Activated CD4-positive, alpha-beta memory T cell treated with anti-CD3 and anti-CD28 coated beads for 36 hours (primary cell): ENCODE measurements at regions of chr22 and their contacts with region 1.

Region 1: GRCh38 chr22:24805790-24806662 is at the start of gene SGSM1:
- DNase-seq: peak; percentile 85
- H3K4me3 Mint-ChIP-seq: peak within 1 kb of the TSS; percentile 66
- H3K27ac Mint-ChIP-seq: no peak within 1 kb of the TSS
- H3K4me1 Mint-ChIP-seq: peaks cover 47% of the 10 kb centered on the region
- H3K27me3 Mint-ChIP-seq: no peaks in the 10 kb centered on the region
- total RNA-seq, gene SGSM1: 0.29 to 0.38 TPM

Region 2: GRCh38 chr22:24555157-24556039 is 250.6 kb before region 1 on chr22 and contains the start of gene SNRPD3:
- CTCF ChIA-PET with region 1: no interaction called
- POLR2A ChIA-PET with region 1: no interaction called
- intact Hi-C with region 1: loop called (anchors 10 kb)
- DNase-seq: peak; percentile 100
- H3K4me3 Mint-ChIP-seq: peak within 1 kb of the TSS; percentile 97
- H3K27ac Mint-ChIP-seq: peak within 1 kb of the TSS; percentile 98
- H3K4me1 Mint-ChIP-seq: peaks cover 48% of the 10 kb centered on the region
- H3K27me3 Mint-ChIP-seq: no peaks in the 10 kb centered on the region
- total RNA-seq, gene SNRPD3: 131 TPM

Region 3: DNA sequence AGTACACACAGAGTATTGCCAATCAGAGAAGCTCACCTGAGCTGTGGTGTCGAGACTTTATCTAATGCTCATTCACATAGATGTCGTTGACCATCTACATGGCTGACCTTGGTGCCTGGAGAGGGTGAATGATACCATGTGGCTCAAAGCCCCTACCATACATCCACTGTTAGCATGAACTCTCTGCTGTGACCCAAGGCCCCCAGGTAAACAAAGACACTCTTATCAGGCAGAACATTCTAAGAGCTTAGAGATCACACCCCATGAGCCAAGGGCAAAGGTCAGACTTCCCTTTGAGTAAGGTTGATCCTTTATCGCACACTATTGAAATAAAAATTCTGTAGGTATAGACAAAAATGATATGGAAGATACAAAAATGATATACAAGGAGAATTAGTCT is 16.5 kb before region 1 on chr22:
- CTCF ChIA-PET with region 1: interaction called, 14 read pairs
- POLR2A ChIA-PET with region 1: interaction called, 3 read pairs
- intact Hi-C with region 1: no loop called
- DNase-seq: no peak
- H3K4me3 Mint-ChIP-seq: no peak overlapping the region
- H3K27ac Mint-ChIP-seq: no peak overlapping the region
- H3K4me1 Mint-ChIP-seq: no peaks in the 10 kb centered on the region
- H3K27me3 Mint-ChIP-seq: no peaks in the 10 kb centered on the region

Region 4: GRCh38 chr22:24834845-24835570 is 29.0 kb after region 1 on chr22:
- CTCF ChIA-PET with region 1: interaction called, 10 read pairs
- POLR2A ChIA-PET with region 1: no interaction called
- intact Hi-C with region 1: no loop called
- DNase-seq: no peak
- H3K4me3 Mint-ChIP-seq: no peak overlapping the region
- H3K27ac Mint-ChIP-seq: no peak overlapping the region
- H3K4me1 Mint-ChIP-seq: peaks cover 4% of the 10 kb centered on the region
- H3K27me3 Mint-ChIP-seq: no peaks in the 10 kb centered on the region

Region 5: GRCh38 chr22:24845041-24845898 is 39.2 kb after region 1 on chr22:
- CTCF ChIA-PET with region 1: interaction called, 27 read pairs
- POLR2A ChIA-PET with region 1: no interaction called
- intact Hi-C with region 1: no loop called
- DNase-seq: no peak
- H3K4me3 Mint-ChIP-seq: no peak overlapping the region
- H3K27ac Mint-ChIP-seq: no peak overlapping the region
- H3K4me1 Mint-ChIP-seq: peaks cover 3% of the 10 kb centered on the region
- H3K27me3 Mint-ChIP-seq: no peaks in the 10 kb centered on the region